Calu3 (cell line): ENCODE measurements at regions of chr19 and their contacts with region 1.

Region 1: GRCh38 chr19:30649934-30650614 is 277.9 kb downstream of the ZNF536 start:
- DNase-seq: peak; percentile 41
- H3K4me3 Mint-ChIP-seq: no peak overlapping the region
- H3K27ac Mint-ChIP-seq: no peak overlapping the region
- H3K4me1 Mint-ChIP-seq: no peaks in the 10 kb centered on the region
- H3K27me3 Mint-ChIP-seq: peaks cover 33% of the 10 kb centered on the region
- CTCF ChIP-seq: peak; percentile 58

Region 2: GRCh38 chr19:29731331-29731850 is 918.7 kb before region 1 on chr19:
- CTCF ChIA-PET with region 1: no interaction called
- intact Hi-C with region 1: loop called (anchors 5 kb)
- DNase-seq: no peak
- H3K4me3 Mint-ChIP-seq: no peak overlapping the region
- H3K27ac Mint-ChIP-seq: no peak overlapping the region
- H3K4me1 Mint-ChIP-seq: no peaks in the 10 kb centered on the region
- H3K27me3 Mint-ChIP-seq: peaks cover 97% of the 10 kb centered on the region
- CTCF ChIP-seq: no peak